ENCODE measurements at regions of chr7 and their contacts with region 1.

Region 1: DNA sequence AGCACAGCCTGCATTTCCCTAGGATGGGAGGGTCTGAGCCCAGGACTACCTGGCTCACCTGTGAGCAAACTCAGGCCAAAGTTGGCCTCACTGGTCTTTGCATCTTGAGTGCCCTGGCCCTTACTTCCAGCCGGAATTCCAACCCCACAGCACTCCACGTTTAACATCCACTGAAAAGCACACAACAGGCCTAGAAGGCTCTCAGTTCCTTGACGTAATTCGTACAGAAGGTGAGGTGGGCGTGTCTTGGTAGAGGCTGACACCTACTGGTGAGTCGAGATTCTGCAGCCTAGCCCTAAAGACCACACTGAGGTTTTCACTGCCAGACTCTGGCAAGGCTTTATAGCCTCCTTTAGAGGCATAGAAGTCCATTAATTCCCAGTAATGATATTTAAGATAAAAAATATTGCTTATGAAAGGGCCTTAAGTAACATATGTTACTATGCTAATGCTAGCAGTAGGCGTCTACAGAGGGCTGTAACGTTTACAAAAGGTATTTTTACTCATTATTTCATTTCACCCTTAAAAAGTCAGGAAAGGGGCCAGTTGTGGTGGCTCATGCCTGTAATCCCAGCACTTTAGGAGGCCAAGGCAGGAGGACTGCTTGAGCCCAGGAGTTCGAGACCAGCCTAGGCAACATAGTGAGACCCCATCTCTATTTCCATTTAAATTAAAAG is 95.8 kb downstream of the HIP1 start:
- DNase-seq: peak; percentile 34 to 62
- H3K4me3 ChIP-seq: no peak overlapping the region
- H3K27ac ChIP-seq: no peak overlapping the region
- H3K4me1 ChIP-seq: 0 out of 2 replicates have a peak, but pooled peaks cover 8% of the 10 kb centered on the region
- H3K27me3 ChIP-seq: no peaks in the 10 kb centered on the region
- CTCF ChIP-seq: peak; percentile 94

Region 2: DNA sequence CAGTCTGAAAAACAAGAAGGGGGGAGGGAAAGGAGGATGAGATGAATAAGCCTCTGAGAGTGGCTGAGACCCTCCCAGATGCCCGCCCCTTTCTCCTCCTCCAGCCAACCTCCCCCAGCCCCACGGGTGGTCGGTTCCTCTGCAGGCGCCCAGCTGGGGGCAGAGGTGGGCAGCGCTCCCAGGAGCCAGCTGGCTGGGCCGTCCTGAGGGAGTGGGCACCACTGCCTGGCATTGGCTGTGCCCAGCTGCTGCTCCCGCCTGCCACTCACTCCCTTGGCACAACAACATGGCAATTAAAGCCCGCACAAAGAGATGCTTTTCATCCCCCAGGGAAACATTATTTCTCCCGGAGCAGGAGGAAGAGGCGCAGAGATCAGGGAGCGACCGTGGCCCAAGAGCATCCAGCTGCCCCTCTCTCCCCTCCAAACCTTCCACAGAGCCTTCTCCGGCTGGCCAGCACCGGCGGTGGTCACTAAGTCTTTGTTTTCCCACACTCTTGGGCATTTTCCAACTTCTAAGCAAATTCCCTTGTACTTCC is 43.6 kb before region 1 on chr7:
- CTCF ChIA-PET with region 1: no interaction called
- POLR2A ChIA-PET with region 1: interaction called, 10 read pairs
- intact Hi-C with region 1: no loop called
- DNase-seq: no peak
- H3K4me3 ChIP-seq: no peak overlapping the region
- H3K27ac ChIP-seq: no peak overlapping the region
- H3K4me1 ChIP-seq: peaks cover 38% of the 10 kb centered on the region
- H3K27me3 ChIP-seq: no peaks in the 10 kb centered on the region
- CTCF ChIP-seq: no peak

Region 3: DNA sequence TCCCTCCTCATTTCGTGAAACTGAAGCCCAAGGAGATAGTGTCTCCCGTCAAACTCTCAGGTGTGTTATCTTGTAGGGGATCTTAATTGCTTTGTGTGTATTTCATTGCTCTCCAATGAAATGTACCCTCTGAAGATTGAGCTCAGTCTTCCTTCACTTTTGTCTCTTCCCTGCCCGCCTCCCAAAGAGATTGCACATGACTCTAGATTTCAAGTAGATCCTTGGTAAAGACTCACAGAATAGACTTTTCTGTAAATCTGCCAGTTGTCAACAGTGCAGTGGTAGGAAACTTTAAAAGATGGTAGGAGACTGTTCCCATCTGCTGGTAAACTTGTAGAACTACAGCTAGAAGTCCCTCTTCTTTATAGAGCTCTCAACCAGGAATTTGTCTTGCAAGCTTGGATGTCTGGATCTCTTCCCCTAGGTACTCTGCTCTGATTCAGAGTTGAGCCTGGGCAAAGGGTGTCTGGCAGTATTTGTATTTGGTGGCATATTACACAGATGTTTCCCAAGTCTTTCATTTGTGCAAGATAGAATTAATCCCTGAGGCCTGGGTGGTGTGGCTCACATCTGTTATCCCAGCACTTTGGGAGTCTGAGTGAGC is 119.5 kb after region 1 on chr7:
- CTCF ChIA-PET with region 1: no interaction called
- POLR2A ChIA-PET with region 1: no interaction called
- intact Hi-C with region 1: loop called (anchors 10 kb)
- DNase-seq: peak in 1 of 2 experiments; percentile 55
- H3K4me3 ChIP-seq: no peak overlapping the region
- H3K27ac ChIP-seq: no peak overlapping the region
- H3K4me1 ChIP-seq: no peaks in the 10 kb centered on the region
- H3K27me3 ChIP-seq: no peaks in the 10 kb centered on the region
- CTCF ChIP-seq: peak; percentile 84

Measured in PC-9 (cell line).